IMR-90 (cell line): ENCODE measurements at regions of chr1 and their contacts with region 1.

Region 1: GRCh38 chr1:153532769-153533599 is 2.8 kb downstream of the S100A6 start:
- DNase-seq: peak; percentile 84
- ATAC-seq: peak; percentile 49
- H3K4me3 ChIP-seq: peak overlapping the region; percentile 8
- H3K27ac ChIP-seq: peak overlapping the region; percentile 91
- H3K4me1 ChIP-seq: peaks cover 25% of the 10 kb centered on the region
- H3K27me3 ChIP-seq: no peaks in the 10 kb centered on the region
- CTCF ChIP-seq: peak; percentile 94
- POLR2A ChIP-seq: peak; percentile 51
- RAD21 ChIP-seq: peak; percentile 87

Region 2: DNA sequence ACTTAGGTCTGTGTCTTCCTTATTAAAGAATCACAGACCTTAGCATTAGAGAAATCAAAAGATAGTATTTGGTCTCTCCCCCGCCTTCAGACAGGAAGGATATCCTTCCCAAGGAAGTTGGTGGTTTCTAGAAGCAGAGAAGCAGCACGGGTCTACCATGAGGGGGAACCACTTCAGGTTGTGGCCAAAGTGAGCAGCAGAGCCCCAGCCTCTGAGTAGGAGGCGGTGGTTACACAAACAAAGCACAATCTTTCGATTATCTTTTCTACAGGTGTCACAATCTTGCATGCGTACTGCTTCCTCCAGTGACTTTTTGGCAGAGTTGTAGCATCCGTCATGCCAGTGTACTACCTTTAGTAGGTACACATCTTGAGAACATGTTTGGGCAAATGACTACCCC is 193.2 kb before region 1 on chr1:
- CTCF ChIA-PET with region 1: no interaction called
- POLR2A ChIA-PET with region 1: no interaction called
- dilution Hi-C with region 1: no loop called
- in situ Hi-C with region 1: no loop called
- intact Hi-C with region 1: no loop called
- DNase-seq: no peak
- ATAC-seq: no peak
- H3K4me3 ChIP-seq: no peak overlapping the region
- H3K27ac ChIP-seq: no peak overlapping the region
- H3K4me1 ChIP-seq: no peaks in the 10 kb centered on the region
- H3K27me3 ChIP-seq: peaks cover 4% of the 10 kb centered on the region
- CTCF ChIP-seq: no peak
- POLR2A ChIP-seq: no peak
- RAD21 ChIP-seq: no peak

Region 3: DNA sequence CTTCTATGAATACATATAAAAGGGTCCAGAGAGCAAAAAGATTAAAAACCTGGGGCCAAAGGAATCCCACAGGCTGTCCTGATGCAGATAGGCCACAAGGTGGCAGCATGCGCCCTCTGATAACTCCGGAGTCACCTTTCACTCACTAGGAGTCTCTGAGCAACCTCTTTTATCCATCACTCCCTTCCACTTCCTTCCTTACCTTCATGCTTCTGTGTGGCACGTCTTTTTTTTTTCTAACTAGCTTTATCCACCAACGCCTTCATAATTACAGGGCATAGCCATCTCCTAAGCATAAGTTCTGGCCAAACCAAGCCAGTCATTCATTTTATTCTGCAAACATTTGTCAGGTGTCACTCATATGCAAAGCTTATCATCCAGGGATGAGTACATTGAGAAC is 180.5 kb before region 1 on chr1:
- CTCF ChIA-PET with region 1: no interaction called
- POLR2A ChIA-PET with region 1: no interaction called
- dilution Hi-C with region 1: no loop called
- in situ Hi-C with region 1: no loop called
- intact Hi-C with region 1: loop called (anchors 1 kb)
- DNase-seq: peak; percentile 62
- ATAC-seq: peak; percentile 93
- H3K4me3 ChIP-seq: no peak overlapping the region
- H3K27ac ChIP-seq: no peak overlapping the region
- H3K4me1 ChIP-seq: no peaks in the 10 kb centered on the region
- H3K27me3 ChIP-seq: peaks cover 4% of the 10 kb centered on the region; the same call in 1 of the 2 replicates
- CTCF ChIP-seq: peak; percentile 92
- POLR2A ChIP-seq: no peak
- RAD21 ChIP-seq: peak; percentile 91

Region 4: DNA sequence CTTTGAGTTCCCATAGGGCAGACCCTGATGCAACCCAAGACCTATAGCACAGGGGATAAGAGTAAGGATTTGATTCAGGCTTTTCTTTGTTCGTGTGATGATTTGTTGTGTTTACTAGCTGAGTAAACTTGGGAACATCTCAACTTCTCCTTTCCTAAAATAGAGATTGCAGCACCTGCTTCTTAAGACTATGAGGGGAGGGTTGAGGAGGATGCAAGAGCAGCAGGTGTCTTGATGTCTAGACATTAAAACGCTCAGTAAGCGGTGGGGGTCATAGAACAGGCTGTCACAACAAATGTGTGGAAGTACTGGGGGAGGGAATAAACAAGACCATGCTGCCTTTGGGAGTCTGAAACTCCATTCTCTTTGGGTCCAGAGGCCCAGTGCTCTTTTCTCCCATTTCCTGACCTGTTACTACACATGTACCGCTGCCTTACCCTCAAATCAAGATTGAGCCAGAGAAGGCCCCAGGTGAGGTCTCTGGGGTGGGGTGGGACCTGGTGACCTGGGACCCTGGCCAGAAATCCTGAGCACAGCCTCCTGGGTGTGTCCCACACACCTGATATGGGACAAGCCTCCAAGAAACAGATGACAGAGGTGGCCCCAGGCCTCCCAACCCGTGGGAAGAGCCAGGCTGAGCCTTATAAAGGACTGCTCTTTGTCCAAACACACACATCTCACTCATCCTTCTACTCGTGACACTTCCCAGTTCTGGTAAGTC is 117.0 kb before region 1 on chr1 and contains the start of gene S100A7A:
- CTCF ChIA-PET with region 1: no interaction called
- POLR2A ChIA-PET with region 1: no interaction called
- dilution Hi-C with region 1: no loop called
- in situ Hi-C with region 1: no loop called
- intact Hi-C with region 1: no loop called
- DNase-seq: no peak
- ATAC-seq: no peak
- H3K4me3 ChIP-seq: no peak within 1 kb of the TSS
- H3K27ac ChIP-seq: no peak within 1 kb of the TSS
- H3K4me1 ChIP-seq: no peaks in the 10 kb centered on the region
- H3K27me3 ChIP-seq: no peaks in the 10 kb centered on the region
- CTCF ChIP-seq: no peak
- POLR2A ChIP-seq: no peak
- RAD21 ChIP-seq: no peak
- total RNA-seq, gene S100A7A: not detected in 2 replicates

Region 5: GRCh38 chr1:153550827-153551500 is 18.0 kb after region 1 on chr1:
- CTCF ChIA-PET with region 1: no interaction called
- POLR2A ChIA-PET with region 1: interaction called, 14 read pairs
- dilution Hi-C with region 1: no loop called
- in situ Hi-C with region 1: no loop called
- intact Hi-C with region 1: no loop called
- DNase-seq: no peak
- ATAC-seq: no peak
- H3K4me3 ChIP-seq: no peak overlapping the region
- H3K27ac ChIP-seq: no peak overlapping the region
- H3K4me1 ChIP-seq: peaks cover 36% of the 10 kb centered on the region
- H3K27me3 ChIP-seq: no peaks in the 10 kb centered on the region
- CTCF ChIP-seq: no peak
- POLR2A ChIP-seq: no peak
- RAD21 ChIP-seq: no peak

Region 6: DNA sequence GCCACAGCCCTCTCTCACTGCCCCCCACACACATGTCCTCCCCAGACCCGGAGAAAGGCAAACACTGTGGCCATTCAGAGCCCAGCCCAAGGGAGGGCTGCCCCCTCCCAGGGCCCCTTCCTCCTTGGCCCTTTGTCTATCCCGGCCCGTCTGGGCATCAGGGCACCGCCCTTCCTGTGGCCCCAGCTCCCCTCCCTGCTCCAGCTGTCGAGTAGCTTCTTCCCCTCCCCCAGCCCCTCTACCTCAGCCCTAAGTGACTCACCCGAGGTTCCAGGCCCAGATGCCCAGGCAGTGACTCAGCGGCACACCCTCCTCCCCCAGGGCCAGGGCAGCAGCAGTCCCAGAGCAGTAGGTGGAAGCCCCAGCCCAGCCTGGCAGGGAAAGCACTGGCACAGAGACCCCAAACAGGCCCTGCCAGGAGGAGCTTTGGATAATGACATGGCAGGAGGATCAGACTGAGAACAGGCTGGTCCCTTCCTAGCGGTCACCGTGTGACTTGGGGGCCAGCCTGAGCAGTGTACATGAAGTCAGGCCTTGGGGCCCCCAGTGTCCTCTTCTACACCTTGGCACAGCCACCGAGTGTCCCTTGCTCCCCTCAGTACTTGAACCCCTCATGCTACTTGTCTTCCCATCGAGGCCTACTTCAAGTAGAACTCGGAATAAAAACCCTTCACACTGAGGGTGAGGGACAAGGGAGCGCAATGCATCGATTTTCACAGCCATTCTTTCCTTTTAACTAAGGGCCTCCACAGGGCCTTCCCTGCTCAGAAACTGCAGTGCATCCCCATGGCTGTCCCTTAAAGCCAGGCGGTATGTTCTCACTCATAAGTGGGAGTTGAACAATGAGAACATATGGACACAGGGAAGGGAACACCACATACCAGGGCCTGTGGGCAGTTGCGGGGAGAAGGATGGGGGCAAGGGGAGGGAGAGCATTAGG is 33.7 kb after region 1 on chr1:
- CTCF ChIA-PET with region 1: interaction called, 19 read pairs
- POLR2A ChIA-PET with region 1: interaction called, 34 read pairs
- dilution Hi-C with region 1: no loop called
- in situ Hi-C with region 1: loop called (anchors 5 kb)
- intact Hi-C with region 1: loop called (anchors 1 kb)
- DNase-seq: peak; percentile 99
- ATAC-seq: peak; percentile 85
- H3K4me3 ChIP-seq: no peak overlapping the region
- H3K27ac ChIP-seq: peak overlapping the region; percentile 94
- H3K4me1 ChIP-seq: peaks cover 31% of the 10 kb centered on the region
- H3K27me3 ChIP-seq: no peaks in the 10 kb centered on the region
- CTCF ChIP-seq: no peak
- POLR2A ChIP-seq: peak; percentile 68
- RAD21 ChIP-seq: peak; percentile 35; the same call in 1 of the 2 replicates

Region 7: GRCh38 chr1:153626922-153627796 is 94.2 kb after region 1 on chr1 and contains the start of gene S100A13:
- CTCF ChIA-PET with region 1: interaction called, 3 read pairs
- POLR2A ChIA-PET with region 1: interaction called, 6 read pairs
- dilution Hi-C with region 1: no loop called
- in situ Hi-C with region 1: no loop called
- intact Hi-C with region 1: loop called (anchors 5 kb)
- DNase-seq: peak; percentile 96
- ATAC-seq: peak; percentile 87
- H3K4me3 ChIP-seq: peak within 1 kb of the TSS; percentile 54
- H3K27ac ChIP-seq: peak within 1 kb of the TSS; percentile 96
- H3K4me1 ChIP-seq: peaks cover 14% of the 10 kb centered on the region
- H3K27me3 ChIP-seq: no peaks in the 10 kb centered on the region
- CTCF ChIP-seq: peak; percentile 60
- POLR2A ChIP-seq: peak; percentile 99
- RAD21 ChIP-seq: peak; percentile 42
- total RNA-seq, gene S100A13: 122 and 225 TPM in 2 replicates

Region 8: GRCh38 chr1:153670859-153671627 is 138.1 kb after region 1 on chr1 and contains the start of gene ILF2:
- CTCF ChIA-PET with region 1: no interaction called
- POLR2A ChIA-PET with region 1: no interaction called
- dilution Hi-C with region 1: no loop called
- in situ Hi-C with region 1: no loop called
- intact Hi-C with region 1: loop called (anchors 5 kb)
- DNase-seq: peak; percentile 100
- ATAC-seq: peak; percentile 93
- H3K4me3 ChIP-seq: peak within 1 kb of the TSS; percentile 65
- H3K27ac ChIP-seq: peak within 1 kb of the TSS; percentile 61
- H3K4me1 ChIP-seq: peaks cover 1% of the 10 kb centered on the region; the same call in 1 of the 2 replicates
- H3K27me3 ChIP-seq: no peaks in the 10 kb centered on the region
- CTCF ChIP-seq: peak; percentile 37
- POLR2A ChIP-seq: peak; percentile 97
- RAD21 ChIP-seq: no peak
- total RNA-seq, gene ILF2: 405 and 504 TPM in 2 replicates